CD4-positive, alpha-beta memory T cell (primary cell): ENCODE measurements at regions of chr14 and their contacts with region 1.

Region 1: DNA sequence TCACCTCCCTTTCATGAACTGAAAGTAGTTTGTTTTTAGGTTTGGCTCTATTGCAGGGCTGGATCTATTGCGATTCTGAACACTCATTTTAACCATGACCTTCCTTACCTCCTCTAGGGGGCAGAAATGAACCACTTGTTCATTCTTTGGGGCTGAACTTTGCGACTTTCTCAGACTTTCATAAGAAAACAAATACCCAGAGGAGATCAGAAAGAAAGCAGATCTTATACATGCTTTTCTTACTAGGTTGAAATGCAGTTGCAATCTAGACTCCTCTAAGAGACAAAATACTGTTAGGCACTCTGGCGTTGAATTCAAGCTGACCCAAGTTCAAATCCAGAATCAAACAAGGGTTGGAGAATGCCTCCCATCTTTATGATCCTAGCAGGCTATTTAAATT is 32.6 kb upstream of the PLEKHG3 start:
- DNase-seq: peak; percentile 44 to 77 (median 71)
- H3K4me3 ChIP-seq: no peak overlapping the region
- H3K4me3 Mint-ChIP-seq: no peak overlapping the region
- H3K27ac ChIP-seq: no peak overlapping the region
- H3K27ac Mint-ChIP-seq: peak overlapping the region in 6 of 7 donors; percentile 11 to 79 (median 64)
- H3K4me1 ChIP-seq: peaks cover 37% of the 10 kb centered on the region
- H3K4me1 Mint-ChIP-seq: peaks cover 30 to 38% (median 33%) of the 10 kb centered on the region in 4 donors
- H3K27me3 ChIP-seq: no peaks in the 10 kb centered on the region
- H3K27me3 Mint-ChIP-seq: no peaks in the 10 kb centered on the region

Region 2: DNA sequence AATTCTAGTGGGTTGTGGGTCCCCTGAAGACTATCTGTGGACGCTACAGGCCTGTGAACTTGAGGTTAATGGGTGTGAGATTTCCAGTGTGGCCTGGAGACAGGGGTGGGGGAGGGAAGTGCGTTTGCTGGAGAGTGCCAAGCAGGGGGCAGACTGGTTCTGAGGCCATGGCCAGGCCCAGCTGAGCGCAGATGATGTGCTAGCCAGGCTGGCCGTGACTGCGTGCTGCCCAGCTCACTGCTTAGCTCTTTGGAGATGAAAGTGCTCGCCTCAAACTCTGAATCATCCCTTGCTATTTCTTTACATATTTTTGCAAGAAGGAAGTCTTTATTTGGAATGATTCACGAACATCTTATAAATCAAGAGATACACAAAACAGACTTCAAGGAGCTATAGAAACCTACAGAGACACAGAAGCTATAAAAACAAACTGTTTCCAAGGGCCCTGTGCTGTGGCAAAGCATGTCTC is 42.6 kb before region 1 on chr14:
- CTCF ChIA-PET with region 1: no interaction called
- POLR2A ChIA-PET with region 1: no interaction called
- intact Hi-C with region 1: no loop called
- DNase-seq: no peak
- H3K4me3 ChIP-seq: no peak overlapping the region
- H3K4me3 Mint-ChIP-seq: no peak overlapping the region
- H3K27ac ChIP-seq: no peak overlapping the region
- H3K27ac Mint-ChIP-seq: no peak overlapping the region
- H3K4me1 ChIP-seq: no peaks in the 10 kb centered on the region
- H3K4me1 Mint-ChIP-seq: no peaks in the 10 kb centered on the region
- H3K27me3 ChIP-seq: no peaks in the 10 kb centered on the region
- H3K27me3 Mint-ChIP-seq: peaks cover 0 to 2% of the 10 kb centered on the region in 2 donors

Region 3: DNA sequence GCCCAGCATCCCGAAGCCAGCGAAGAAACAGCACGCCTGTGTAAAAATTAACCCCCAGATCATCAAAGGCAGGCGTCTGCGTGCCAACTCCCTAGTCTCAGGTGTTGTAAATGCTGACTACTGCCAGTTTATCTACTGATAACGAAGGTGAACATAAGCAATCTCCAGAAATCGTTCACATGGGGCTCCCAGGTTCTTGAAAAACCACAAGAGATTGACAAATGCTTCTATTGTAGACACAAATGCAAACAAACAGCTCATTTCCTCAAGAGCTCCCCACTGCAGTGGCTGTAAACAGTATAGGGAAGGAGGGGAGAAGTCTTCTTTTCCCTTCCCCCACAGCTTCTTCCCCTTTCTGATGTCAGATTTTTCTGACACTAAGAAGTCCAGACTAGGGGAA is 27.3 kb after region 1 on chr14:
- CTCF ChIA-PET with region 1: interaction called, 62 read pairs
- POLR2A ChIA-PET with region 1: interaction called, 59 read pairs
- intact Hi-C with region 1: loop called (anchors 2 kb)
- DNase-seq: peak in 4 of 5 donors; percentile 37 to 59 (median 50)
- H3K4me3 ChIP-seq: no peak overlapping the region
- H3K4me3 Mint-ChIP-seq: peak overlapping the region; percentile 11 to 80 (median 60)
- H3K27ac ChIP-seq: peak overlapping the region; percentile 7
- H3K27ac Mint-ChIP-seq: peak overlapping the region; percentile 48 to 95 (median 86)
- H3K4me1 ChIP-seq: peaks cover 89% of the 10 kb centered on the region
- H3K4me1 Mint-ChIP-seq: peaks cover 53 to 88% (median 64%) of the 10 kb centered on the region in 4 donors
- H3K27me3 ChIP-seq: no peaks in the 10 kb centered on the region
- H3K27me3 Mint-ChIP-seq: no peaks in the 10 kb centered on the region

Region 4: GRCh38 chr14:64720131-64720576 is 48.6 kb after region 1 on chr14:
- CTCF ChIA-PET with region 1: interaction called, 7 read pairs
- POLR2A ChIA-PET with region 1: interaction called, 24 read pairs
- intact Hi-C with region 1: loop called (anchors 5 kb)
- DNase-seq: no peak
- H3K4me3 ChIP-seq: no peak overlapping the region
- H3K4me3 Mint-ChIP-seq: peak overlapping the region in 7 of 8 donors; percentile 40 to 77 (median 65)
- H3K27ac ChIP-seq: peak overlapping the region; percentile 1
- H3K27ac Mint-ChIP-seq: peak overlapping the region; percentile 78 to 97 (median 92)
- H3K4me1 ChIP-seq: peaks cover 100% of the 10 kb centered on the region
- H3K4me1 Mint-ChIP-seq: peaks cover 77 to 100% (median 91%) of the 10 kb centered on the region in 4 donors
- H3K27me3 ChIP-seq: no peaks in the 10 kb centered on the region
- H3K27me3 Mint-ChIP-seq: no peaks in the 10 kb centered on the region